OCI-LY7 (cell line): ENCODE measurements at regions of chr17 and their contacts with region 1.

Region 1: DNA sequence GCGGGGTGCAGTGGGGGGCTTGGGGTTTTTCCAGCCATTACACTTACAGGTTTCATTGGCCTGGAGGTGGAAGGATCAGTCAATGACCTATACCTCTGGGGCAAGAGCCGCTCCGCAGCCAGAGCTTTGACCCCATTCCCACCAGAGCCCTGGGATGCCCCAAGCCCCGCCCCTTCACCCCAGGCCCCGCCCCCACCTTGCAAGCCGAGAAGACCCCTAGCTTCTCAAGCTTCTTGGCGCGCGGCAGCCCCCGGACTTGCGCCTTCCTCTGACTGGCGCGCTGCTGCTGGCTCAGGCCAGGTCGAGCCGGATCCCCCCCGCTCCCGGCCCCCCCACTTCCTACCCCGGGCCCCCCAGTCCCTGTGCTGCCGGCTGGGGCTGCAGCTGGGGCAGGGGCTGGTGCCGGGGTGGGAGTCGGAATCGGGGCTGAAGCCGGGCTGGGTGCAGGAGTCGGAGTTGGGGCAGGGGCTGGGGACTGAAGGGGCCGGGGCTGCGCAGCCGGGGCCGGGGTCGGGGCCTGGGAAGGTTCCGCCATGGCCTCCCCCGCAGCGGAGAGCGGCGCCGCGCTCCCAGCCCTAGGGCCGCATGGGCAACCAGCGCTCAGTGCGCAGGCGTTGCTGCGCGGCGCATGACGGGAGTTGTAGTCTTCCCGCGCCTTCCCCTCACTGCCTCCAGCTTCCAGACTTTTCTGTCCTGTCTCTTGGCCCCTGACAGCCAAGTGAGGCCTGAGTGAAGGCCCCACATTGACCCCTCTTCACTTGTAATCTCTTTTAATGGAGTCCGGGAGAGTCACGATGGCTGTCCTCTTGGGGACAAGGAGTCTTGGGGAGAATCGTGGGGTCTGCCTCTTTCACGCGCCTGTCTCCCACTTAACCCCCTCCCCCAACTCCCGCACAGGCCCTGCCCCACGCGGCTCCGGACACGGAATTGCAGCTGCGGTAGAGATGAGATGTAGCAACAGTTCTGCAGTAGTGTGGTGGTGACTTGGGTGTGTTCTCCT is at the start of gene KAT2A:
- DNase-seq: peak; percentile 87
- H3K4me3 ChIP-seq: peak within 1 kb of the TSS; percentile 77
- H3K27ac ChIP-seq: peak within 1 kb of the TSS; percentile 46
- H3K4me1 ChIP-seq: peaks cover 44% of the 10 kb centered on the region
- CTCF ChIP-seq: no peak
- total RNA-seq, gene KAT2A: 56.1 and 73.0 TPM in 2 replicates

Region 2: DNA sequence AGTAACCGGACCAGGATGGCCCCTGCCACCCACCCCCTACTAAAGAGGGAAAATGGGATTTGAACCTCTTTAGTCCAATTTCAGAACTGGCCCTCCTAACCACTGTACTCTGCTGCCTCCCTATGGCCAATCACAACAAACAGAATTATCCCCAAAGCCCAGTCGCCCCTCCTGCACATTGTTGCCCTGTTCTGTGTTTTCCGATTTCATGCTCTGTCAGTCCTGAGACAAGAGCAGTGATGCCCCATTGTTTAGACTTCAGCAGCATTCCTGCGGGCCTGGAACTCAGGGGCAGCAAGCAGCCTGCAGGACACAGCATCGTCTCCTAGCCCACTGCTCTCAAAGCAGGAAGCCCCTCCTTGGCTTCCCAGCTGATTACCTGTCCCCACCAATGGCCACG is 235.3 kb before region 1 on chr17:
- CTCF ChIA-PET with region 1: no interaction called
- POLR2A ChIA-PET with region 1: no interaction called
- intact Hi-C with region 1: no loop called
- DNase-seq: no peak
- H3K4me3 ChIP-seq: no peak overlapping the region
- H3K27ac ChIP-seq: no peak overlapping the region
- H3K4me1 ChIP-seq: no peaks in the 10 kb centered on the region
- CTCF ChIP-seq: peak; percentile 62

Region 3: GRCh38 chr17:42183741-42184711 is 63.0 kb after region 1 on chr17:
- CTCF ChIA-PET with region 1: no interaction called
- POLR2A ChIA-PET with region 1: no interaction called
- intact Hi-C with region 1: loop called (anchors 1 kb)
- DNase-seq: peak; percentile 79
- H3K4me3 ChIP-seq: peak overlapping the region; percentile 61
- H3K27ac ChIP-seq: no peak overlapping the region
- H3K4me1 ChIP-seq: peaks cover 27% of the 10 kb centered on the region
- CTCF ChIP-seq: peak; percentile 81

Region 4: GRCh38 chr17:42459256-42459800 is 338.3 kb after region 1 on chr17:
- CTCF ChIA-PET with region 1: no interaction called
- POLR2A ChIA-PET with region 1: no interaction called
- intact Hi-C with region 1: no loop called
- DNase-seq: peak; percentile 59
- H3K4me3 ChIP-seq: peak overlapping the region; percentile 84
- H3K27ac ChIP-seq: peak overlapping the region; percentile 54
- H3K4me1 ChIP-seq: peaks cover 46% of the 10 kb centered on the region
- CTCF ChIP-seq: peak; percentile 94